ENCODE measurements at regions of chr12 and their contacts with region 1.

Region 1: DNA sequence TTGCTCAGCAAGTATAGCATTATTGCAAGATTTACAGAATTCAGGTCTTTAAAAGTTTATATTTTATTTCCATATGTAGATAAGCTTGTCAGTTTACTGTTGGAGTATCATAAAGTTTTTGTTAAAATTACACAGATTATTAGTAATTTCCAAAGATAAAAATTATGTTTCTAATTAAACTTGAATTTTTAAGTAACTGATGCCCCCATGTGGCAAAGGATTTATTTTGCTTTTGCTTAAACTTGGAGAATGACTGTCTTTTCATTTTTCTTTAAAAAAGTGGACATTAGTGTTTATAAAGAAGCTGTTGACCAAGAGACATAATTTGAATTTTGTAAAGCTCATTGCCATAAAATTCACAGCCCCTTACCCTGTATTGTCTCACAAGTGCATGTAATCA is 45.8 kb downstream of the ETNK1 start:
- DNase-seq: no peak
- ATAC-seq: no peak
- H3K4me3 ChIP-seq: no peak overlapping the region
- H3K27ac ChIP-seq: no peak overlapping the region
- H3K4me1 ChIP-seq: no peaks in the 10 kb centered on the region
- H3K27me3 ChIP-seq: no peaks in the 10 kb centered on the region
- CTCF ChIP-seq: no peak; a peak in 1 of 6 replicates
- EP300 ChIP-seq: no peak
- POLR2A ChIP-seq: no peak
- RAD21 ChIP-seq: peak; percentile 19; the same call in 1 of the 2 replicates

Region 2: DNA sequence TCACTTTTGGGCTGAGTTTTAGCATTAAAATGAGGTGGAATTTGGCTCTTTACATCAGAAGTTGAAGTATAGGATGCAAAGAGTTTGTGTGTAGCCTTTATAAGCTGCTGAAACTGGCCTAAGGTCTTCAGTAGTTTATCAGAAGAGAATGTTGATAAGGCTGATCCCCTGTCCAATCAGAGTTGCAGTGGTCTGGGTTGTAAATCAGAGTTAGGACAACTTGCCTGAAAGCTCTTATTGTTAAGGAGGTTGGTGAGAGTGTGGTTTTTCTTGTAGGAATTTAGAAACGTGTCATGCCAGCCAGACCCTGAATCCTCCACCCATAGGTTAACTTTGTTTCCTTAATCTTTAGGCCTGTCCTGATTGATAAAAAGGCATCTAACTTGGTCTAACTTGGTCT is 479.8 kb before region 1 on chr12:
- CTCF ChIA-PET with region 1: no interaction called
- POLR2A ChIA-PET with region 1: no interaction called
- RAD21 ChIA-PET with region 1: no interaction called
- SMC1A ChIA-PET with region 1: no interaction called
- in situ Hi-C with region 1: no loop called
- intact Hi-C with region 1: no loop called
- DNase-seq: no peak
- ATAC-seq: no peak
- H3K4me3 ChIP-seq: no peak overlapping the region
- H3K27ac ChIP-seq: no peak overlapping the region
- H3K4me1 ChIP-seq: no peaks in the 10 kb centered on the region
- H3K27me3 ChIP-seq: no peaks in the 10 kb centered on the region
- CTCF ChIP-seq: no peak
- EP300 ChIP-seq: no peak
- POLR2A ChIP-seq: no peak
- RAD21 ChIP-seq: no peak

Region 3: GRCh38 chr12:22624870-22625761 is 45.6 kb before region 1 on chr12 and contains the start of gene ETNK1:
- CTCF ChIA-PET with region 1: interaction called, 11 read pairs
- POLR2A ChIA-PET with region 1: no interaction called
- RAD21 ChIA-PET with region 1: interaction called, 4 read pairs
- SMC1A ChIA-PET with region 1: interaction called, 3 read pairs
- in situ Hi-C with region 1: no loop called
- intact Hi-C with region 1: no loop called
- DNase-seq: peak; percentile 27
- ATAC-seq: peak; percentile 94
- H3K4me3 ChIP-seq: peak within 1 kb of the TSS; percentile 78
- H3K27ac ChIP-seq: peak within 1 kb of the TSS; percentile 87
- H3K4me1 ChIP-seq: no peaks in the 10 kb centered on the region
- H3K27me3 ChIP-seq: no peaks in the 10 kb centered on the region
- CTCF ChIP-seq: no peak
- EP300 ChIP-seq: no peak
- POLR2A ChIP-seq: peak; percentile 97
- RAD21 ChIP-seq: no peak
- polyA plus RNA-seq, gene ETNK1: 12.3 to 16.3 TPM

Region 4: DNA sequence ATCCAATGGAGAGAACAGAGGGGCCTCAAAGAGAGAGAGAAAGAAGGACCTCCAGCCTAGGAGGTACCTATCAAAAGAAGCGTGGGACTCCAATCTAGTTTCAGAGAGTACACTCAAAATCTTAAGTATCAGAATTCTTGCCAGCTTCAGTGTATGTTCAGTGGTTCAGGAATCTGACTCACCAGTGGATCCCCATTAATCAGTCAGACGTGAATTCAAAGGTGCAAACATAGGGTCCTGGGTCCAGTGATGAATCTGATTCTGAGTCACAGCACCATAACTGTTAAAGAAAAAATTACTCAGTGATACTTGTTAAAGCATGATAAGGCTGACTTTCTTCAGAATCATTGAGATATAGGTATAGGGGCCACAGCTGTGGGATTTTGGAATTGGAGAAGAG is 12.5 kb before region 1 on chr12:
- CTCF ChIA-PET with region 1: interaction called, 6 read pairs
- POLR2A ChIA-PET with region 1: no interaction called
- RAD21 ChIA-PET with region 1: no interaction called
- SMC1A ChIA-PET with region 1: interaction called, 9 read pairs
- in situ Hi-C with region 1: no loop called
- intact Hi-C with region 1: loop called (anchors 2 kb)
- DNase-seq: no peak
- ATAC-seq: peak; percentile 52
- H3K4me3 ChIP-seq: no peak overlapping the region
- H3K27ac ChIP-seq: no peak overlapping the region
- H3K4me1 ChIP-seq: no peaks in the 10 kb centered on the region
- H3K27me3 ChIP-seq: no peaks in the 10 kb centered on the region
- CTCF ChIP-seq: no peak
- EP300 ChIP-seq: no peak
- POLR2A ChIP-seq: no peak
- RAD21 ChIP-seq: no peak